Activated CD4-positive, alpha-beta T cell treated with anti-CD3 and anti-CD28 coated beads for 36 hours (primary cell): ENCODE measurements at regions of chr2 and their contacts with region 1.

Region 1: GRCh38 chr2:196068271-196069209 is at the start of gene DNAH7:
- DNase-seq: peak; percentile 94
- ATAC-seq: peak; percentile 97
- H3K4me3 Mint-ChIP-seq: peak within 1 kb of the TSS; percentile 77
- H3K27ac Mint-ChIP-seq: peak within 1 kb of the TSS; percentile 72
- H3K4me1 Mint-ChIP-seq: peaks cover 10% of the 10 kb centered on the region
- H3K27me3 Mint-ChIP-seq: peaks cover under 1% of the 10 kb centered on the region
- total RNA-seq, gene DNAH7: not detected

Region 2: DNA sequence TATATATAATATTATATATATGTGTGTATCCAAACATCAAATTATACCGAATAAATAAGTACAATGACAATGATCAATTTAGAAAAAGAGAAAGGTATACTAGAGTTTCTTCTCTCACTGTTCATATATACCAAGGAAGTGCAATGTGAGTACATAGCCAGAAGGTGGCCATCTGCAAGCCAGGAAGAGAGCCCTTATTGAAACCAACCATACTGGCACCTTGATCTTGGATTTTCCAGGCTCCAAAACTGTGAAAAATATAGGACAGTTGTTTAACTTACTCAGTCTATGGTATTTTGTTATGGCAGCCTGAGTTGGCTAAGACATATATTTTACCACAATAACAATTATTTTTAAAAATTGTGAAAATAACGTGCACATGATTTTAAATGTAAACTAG is 1901.7 kb before region 1 on chr2:
- CTCF ChIA-PET with region 1: no interaction called
- POLR2A ChIA-PET with region 1: no interaction called
- intact Hi-C with region 1: loop called in 1 of 2 experiments (anchors 5 kb)
- DNase-seq: peak; percentile 16
- ATAC-seq: no peak
- H3K4me3 Mint-ChIP-seq: no peak overlapping the region
- H3K27ac Mint-ChIP-seq: no peak overlapping the region
- H3K4me1 Mint-ChIP-seq: no peaks in the 10 kb centered on the region
- H3K27me3 Mint-ChIP-seq: no peaks in the 10 kb centered on the region

Region 3: DNA sequence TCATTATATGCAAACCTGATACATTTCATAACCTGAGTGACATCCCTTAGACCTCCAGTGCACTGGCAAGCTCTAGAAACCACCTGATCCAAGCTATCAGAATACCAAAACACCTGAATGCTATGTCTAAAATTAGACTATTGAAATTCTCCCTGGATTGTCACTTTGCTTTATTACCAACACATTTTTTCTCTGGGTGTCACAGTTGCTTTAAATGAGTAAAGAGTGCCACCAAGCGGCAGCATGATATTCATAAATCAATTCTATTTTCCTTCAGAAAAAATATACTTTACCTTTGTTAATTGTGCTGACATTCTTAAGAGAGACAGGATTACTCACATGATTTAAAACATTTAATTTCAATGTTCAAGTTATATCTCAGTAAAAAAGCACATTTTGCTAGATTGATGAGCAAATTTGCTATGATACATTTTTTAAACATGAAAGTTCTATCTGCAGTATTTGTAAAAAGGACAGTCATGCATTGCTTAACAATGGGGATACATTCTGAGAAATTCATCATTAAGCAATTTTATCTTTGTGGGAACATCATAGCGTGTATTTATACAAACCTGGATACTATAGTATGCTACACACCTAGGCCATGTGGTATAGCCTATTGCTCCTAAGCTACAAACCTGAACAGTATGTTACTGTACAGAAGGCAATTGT is 750.0 kb before region 1 on chr2:
- CTCF ChIA-PET with region 1: interaction called, 7 read pairs
- POLR2A ChIA-PET with region 1: no interaction called
- intact Hi-C with region 1: loop called (anchors 2 to 5 kb)
- DNase-seq: peak; percentile 60
- ATAC-seq: peak; percentile 57
- H3K4me3 Mint-ChIP-seq: no peak overlapping the region
- H3K27ac Mint-ChIP-seq: no peak overlapping the region
- H3K4me1 Mint-ChIP-seq: peaks cover 10% of the 10 kb centered on the region
- H3K27me3 Mint-ChIP-seq: no peaks in the 10 kb centered on the region

Region 4: GRCh38 chr2:195559431-195559914 is 509.1 kb before region 1 on chr2:
- CTCF ChIA-PET with region 1: no interaction called
- POLR2A ChIA-PET with region 1: no interaction called
- intact Hi-C with region 1: loop called in 1 of 2 experiments (anchors 1 kb)
- DNase-seq: peak; percentile 88
- ATAC-seq: peak; percentile 72
- H3K4me3 Mint-ChIP-seq: peak overlapping the region; percentile 33
- H3K27ac Mint-ChIP-seq: peak overlapping the region; percentile 97
- H3K4me1 Mint-ChIP-seq: peaks cover 67% of the 10 kb centered on the region
- H3K27me3 Mint-ChIP-seq: no peaks in the 10 kb centered on the region

Region 5: GRCh38 chr2:195664528-195664927 is 404.0 kb before region 1 on chr2:
- CTCF ChIA-PET with region 1: interaction called, 21 read pairs
- POLR2A ChIA-PET with region 1: no interaction called
- intact Hi-C with region 1: loop called (anchors 2 kb)
- DNase-seq: no peak
- ATAC-seq: no peak
- H3K4me3 Mint-ChIP-seq: no peak overlapping the region
- H3K27ac Mint-ChIP-seq: no peak overlapping the region
- H3K4me1 Mint-ChIP-seq: peaks cover 54% of the 10 kb centered on the region
- H3K27me3 Mint-ChIP-seq: no peaks in the 10 kb centered on the region

Region 6: DNA sequence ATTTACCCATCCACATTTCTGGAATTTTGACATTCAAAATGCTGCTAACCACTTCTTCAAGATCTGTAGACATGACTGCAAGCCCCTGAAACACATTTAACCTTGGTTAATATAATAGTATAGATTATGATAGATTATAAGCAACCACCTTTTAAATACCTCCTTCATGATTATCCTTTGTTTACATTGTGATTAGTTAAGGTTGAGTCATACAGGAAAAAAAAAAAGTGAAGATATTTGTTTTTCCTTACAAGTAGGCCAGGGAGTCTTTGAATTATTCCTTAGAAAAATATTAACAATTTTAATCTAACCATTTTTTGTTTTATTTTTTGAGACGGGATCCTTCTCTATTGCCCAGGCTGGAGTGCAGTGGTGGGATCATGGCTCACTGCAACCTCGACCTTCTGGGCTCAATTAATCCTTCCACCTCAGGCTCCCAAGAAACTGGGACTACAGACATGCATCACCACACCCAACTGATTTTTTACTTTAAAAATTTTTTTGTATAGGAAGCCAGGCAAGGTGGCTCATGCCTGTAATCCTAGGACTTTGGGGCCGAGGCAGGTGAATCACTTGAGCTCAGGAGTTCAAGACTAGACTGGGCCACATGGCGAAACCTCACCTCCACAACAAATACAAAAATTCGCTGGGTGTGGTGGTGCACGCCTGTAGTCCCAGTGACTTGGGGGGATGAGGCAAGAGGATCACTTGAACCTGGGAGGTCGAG is 312.2 kb before region 1 on chr2:
- CTCF ChIA-PET with region 1: no interaction called
- POLR2A ChIA-PET with region 1: no interaction called
- intact Hi-C with region 1: no loop called
- DNase-seq: no peak
- ATAC-seq: no peak
- H3K4me3 Mint-ChIP-seq: no peak overlapping the region
- H3K27ac Mint-ChIP-seq: no peak overlapping the region
- H3K4me1 Mint-ChIP-seq: no peaks in the 10 kb centered on the region
- H3K27me3 Mint-ChIP-seq: no peaks in the 10 kb centered on the region

Region 7: DNA sequence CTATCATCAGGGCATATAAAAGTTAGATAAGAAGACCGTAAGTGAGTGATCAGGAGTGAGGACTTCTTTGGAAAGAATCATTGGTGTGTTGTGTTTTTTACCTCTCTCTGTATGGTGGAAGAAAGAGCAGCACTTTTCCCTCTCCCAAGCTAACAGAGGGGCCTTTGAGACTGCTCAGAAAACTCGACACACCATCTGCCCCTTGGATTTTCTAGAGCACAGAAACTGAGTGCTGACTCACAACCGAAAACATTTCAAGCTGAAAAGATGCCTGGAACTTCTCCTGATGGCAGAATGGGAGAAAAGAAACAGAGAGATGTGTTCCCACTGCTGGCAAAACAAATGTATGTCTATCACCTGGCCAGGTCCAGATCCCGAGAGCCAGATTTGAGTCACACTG is 156.5 kb before region 1 on chr2:
- CTCF ChIA-PET with region 1: no interaction called
- POLR2A ChIA-PET with region 1: no interaction called
- intact Hi-C with region 1: no loop called
- DNase-seq: no peak
- ATAC-seq: no peak
- H3K4me3 Mint-ChIP-seq: no peak overlapping the region
- H3K27ac Mint-ChIP-seq: no peak overlapping the region
- H3K4me1 Mint-ChIP-seq: no peaks in the 10 kb centered on the region
- H3K27me3 Mint-ChIP-seq: no peaks in the 10 kb centered on the region

Region 8: DNA sequence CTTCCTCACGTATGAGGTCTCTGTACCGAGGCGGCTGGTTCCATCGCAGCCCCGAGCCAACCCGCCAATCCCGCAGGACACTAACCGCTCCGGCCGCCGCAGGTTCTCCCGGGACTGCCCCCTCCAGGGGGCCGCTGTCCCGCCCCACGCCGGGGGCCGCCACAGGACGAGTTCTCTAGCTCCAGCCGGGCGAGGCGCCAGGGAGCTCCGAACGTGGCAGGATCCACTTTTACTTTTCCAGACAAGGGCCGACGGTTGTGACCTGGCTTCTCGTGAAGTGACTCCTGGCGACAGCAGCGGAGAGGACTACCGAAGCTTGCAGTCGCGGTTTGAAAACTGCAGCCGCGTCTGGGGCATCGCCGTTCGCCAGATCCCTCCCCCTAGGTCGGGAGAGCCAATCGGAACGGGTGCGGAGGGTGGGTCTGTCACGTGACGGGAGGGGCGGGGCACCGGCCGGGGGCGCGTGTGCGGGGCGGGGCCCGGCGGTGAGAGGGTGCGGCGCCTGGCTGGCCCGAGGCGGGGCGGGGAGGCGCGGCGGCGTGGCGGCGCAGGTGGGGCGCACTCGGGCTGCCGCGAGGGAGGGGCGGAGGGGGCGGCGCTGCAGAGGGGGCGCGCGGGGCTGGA is 102.8 kb after region 1 on chr2 and contains the start of gene STK17B:
- CTCF ChIA-PET with region 1: interaction called, 11 read pairs
- POLR2A ChIA-PET with region 1: no interaction called
- intact Hi-C with region 1: no loop called
- DNase-seq: peak; percentile 99
- ATAC-seq: peak; percentile 76
- H3K4me3 Mint-ChIP-seq: peak within 1 kb of the TSS; percentile 92
- H3K27ac Mint-ChIP-seq: peak within 1 kb of the TSS; percentile 98
- H3K4me1 Mint-ChIP-seq: peaks cover 38% of the 10 kb centered on the region
- H3K27me3 Mint-ChIP-seq: no peaks in the 10 kb centered on the region
- total RNA-seq, gene STK17B: 159 to 178 TPM

Region 9: GRCh38 chr2:196453613-196454047 is 385.1 kb after region 1 on chr2:
- CTCF ChIA-PET with region 1: interaction called, 29 read pairs
- POLR2A ChIA-PET with region 1: no interaction called
- intact Hi-C with region 1: no loop called
- DNase-seq: peak; percentile 58
- ATAC-seq: peak; percentile 51
- H3K4me3 Mint-ChIP-seq: no peak overlapping the region
- H3K27ac Mint-ChIP-seq: no peak overlapping the region
- H3K4me1 Mint-ChIP-seq: peaks cover 2% of the 10 kb centered on the region
- H3K27me3 Mint-ChIP-seq: peaks cover 22% of the 10 kb centered on the region

Region 10: GRCh38 chr2:197261808-197262226 is 1193.3 kb after region 1 on chr2:
- CTCF ChIA-PET with region 1: no interaction called
- POLR2A ChIA-PET with region 1: no interaction called
- intact Hi-C with region 1: no loop called
- DNase-seq: no peak
- ATAC-seq: peak; percentile 2
- H3K4me3 Mint-ChIP-seq: peak overlapping the region; percentile 56
- H3K27ac Mint-ChIP-seq: peak overlapping the region; percentile 88
- H3K4me1 Mint-ChIP-seq: peaks cover 82% of the 10 kb centered on the region
- H3K27me3 Mint-ChIP-seq: no peaks in the 10 kb centered on the region

Region 11: DNA sequence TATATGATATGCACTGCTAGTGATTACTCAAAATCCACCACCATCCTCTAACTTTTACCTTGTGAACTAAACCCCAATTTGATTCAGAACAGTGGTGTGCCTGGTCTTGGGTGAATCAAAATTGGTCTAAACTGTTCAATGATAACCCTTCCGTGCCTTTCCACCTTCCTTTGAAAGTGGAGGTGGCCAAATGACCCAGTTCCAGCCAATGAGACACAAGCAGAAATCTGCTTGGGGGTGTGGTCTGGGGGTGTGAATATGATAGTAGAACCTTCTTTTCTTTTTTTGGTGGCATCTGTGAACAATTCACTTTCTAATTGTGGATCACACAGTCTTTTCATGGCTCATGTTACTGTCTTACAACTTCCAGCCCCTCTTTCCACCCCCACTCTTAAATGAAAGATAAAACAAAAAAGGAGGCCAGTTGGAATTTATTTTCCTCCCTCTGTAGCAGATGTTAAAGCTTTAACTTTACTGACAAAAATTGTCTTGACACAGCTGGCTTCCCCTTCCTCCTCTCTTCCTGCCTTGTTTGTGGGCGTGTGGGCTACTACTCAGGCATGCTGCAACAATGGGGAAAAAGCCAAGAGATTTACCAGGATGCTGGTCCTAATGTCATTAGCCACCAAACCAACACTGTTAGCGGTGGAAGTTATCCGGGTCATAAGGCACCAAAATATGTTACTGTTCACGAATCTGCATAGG is 1300.8 kb after region 1 on chr2:
- CTCF ChIA-PET with region 1: no interaction called
- POLR2A ChIA-PET with region 1: no interaction called
- intact Hi-C with region 1: no loop called
- DNase-seq: no peak
- ATAC-seq: peak; percentile 36
- H3K4me3 Mint-ChIP-seq: no peak overlapping the region
- H3K27ac Mint-ChIP-seq: peak overlapping the region; percentile 49
- H3K4me1 Mint-ChIP-seq: peaks cover 18% of the 10 kb centered on the region
- H3K27me3 Mint-ChIP-seq: no peaks in the 10 kb centered on the region